Heart right ventricle (tissue), 16 donors: ENCODE measurements at regions of chr6 and their contacts with region 1.

Region 1: DNA sequence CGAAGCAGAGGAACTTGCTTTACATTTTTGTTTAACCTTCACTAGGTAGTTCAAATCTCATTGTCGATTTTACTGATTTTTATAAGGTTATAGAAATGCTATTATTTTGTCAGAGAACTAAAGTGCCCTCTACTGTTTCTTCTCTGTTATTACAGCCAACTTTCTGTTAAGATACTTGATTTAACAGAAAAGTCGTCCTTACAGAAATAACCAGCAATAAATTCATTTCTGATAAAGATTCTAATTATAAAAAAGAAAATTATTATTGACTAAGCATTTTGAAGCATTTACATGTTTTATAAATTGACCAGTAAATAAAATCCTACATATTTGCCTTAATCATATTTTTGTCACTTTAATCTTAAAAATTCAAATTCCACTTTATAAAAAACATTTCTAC is 60.8 kb downstream of the OGFRL1 start:
- DNase-seq: no peak
- ATAC-seq: peak in 1 of 8 donors; percentile 52
- H3K4me3 ChIP-seq: no peak overlapping the region
- H3K27ac ChIP-seq: peak overlapping the region in 7 of 10 donors; percentile 28 to 83 (median 57)
- H3K4me1 ChIP-seq: peaks cover 0 to 38% (median 20%) of the 10 kb centered on the region in 9 donors
- H3K27me3 ChIP-seq: no peaks in the 10 kb centered on the region
- CTCF ChIP-seq: peak; percentile 60 to 85 (median 77)

Region 2: DNA sequence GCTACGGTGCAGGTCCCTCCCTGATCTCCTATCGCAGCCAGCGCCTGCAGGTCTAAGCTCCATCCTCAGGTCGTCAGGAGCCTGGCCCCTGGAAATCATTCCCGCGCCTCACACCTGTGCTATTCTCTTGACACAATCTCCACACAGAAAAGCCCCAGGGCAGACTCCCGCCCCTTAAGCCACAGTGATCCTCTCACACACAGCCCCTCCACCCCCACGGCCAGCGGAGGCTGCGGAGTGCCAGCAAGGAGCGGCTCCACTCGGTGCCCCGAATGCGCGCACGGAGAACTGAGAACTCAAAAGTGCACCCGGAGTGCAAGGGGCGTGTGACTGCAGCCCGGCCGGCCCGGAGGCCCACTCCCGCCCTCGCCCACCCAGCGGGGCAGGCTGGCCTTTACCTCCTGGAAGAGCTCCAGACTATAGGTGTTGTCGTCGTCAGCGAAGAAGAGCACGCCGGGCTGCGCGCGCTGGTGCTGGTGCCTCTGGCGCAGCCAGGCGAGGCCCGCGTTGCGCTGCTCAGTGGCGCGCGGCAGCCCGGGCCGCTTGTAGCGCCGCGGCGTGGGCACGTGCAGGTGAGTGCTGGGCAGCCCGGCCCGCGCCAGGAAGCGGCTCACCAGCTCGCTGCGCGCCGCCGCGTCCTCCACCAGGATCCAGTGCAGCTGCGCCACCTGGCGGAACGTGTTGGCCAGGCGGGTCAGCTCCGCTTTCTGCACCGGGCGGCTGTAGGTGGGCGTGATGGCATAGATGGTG is 393.8 kb before region 1 on chr6:
- intact Hi-C with region 1: loop called in 1 of 10 experiments (anchors 10 kb)
- DNase-seq: peak; percentile 77 to 87
- ATAC-seq: peak; percentile 88 to 97 (median 94)
- H3K4me3 ChIP-seq: peak overlapping the region; percentile 49 to 66 (median 60)
- H3K27ac ChIP-seq: no peak overlapping the region
- H3K4me1 ChIP-seq: peaks cover 6 to 24% (median 15%) of the 10 kb centered on the region in 9 donors
- H3K27me3 ChIP-seq: peaks cover 8 to 87% (median 43%) of the 10 kb centered on the region in 7 donors
- CTCF ChIP-seq: peak; percentile 70 to 93 (median 86)

Region 3: DNA sequence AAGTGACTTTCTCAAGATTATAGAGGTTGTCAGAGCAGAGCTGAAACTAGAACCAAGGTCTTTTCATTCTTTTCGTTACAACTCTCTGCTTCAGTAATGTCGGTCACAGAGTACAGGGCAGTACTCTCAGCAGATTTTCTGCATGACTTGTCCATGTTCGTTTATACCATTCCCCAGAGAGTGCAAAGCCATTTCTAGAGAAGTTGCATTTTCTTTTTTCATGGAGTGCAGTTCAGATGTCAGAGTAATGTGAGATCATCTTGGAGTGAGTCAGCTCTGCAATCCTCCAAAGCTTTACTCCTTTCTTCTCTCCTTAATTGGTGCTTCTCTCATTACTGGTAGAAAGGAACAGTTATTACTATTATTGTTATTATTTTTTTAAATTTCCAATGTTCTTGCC is 276.9 kb before region 1 on chr6:
- intact Hi-C with region 1: loop called in 1 of 10 experiments (anchors 5 kb)
- DNase-seq: no peak
- ATAC-seq: peak in 6 of 8 donors; percentile 42 to 78 (median 64)
- H3K4me3 ChIP-seq: no peak overlapping the region
- H3K27ac ChIP-seq: no peak overlapping the region
- H3K4me1 ChIP-seq: peaks cover 0 to 16% (median 0%) of the 10 kb centered on the region in 9 donors
- H3K27me3 ChIP-seq: no peaks in the 10 kb centered on the region
- CTCF ChIP-seq: no peak

Region 4: DNA sequence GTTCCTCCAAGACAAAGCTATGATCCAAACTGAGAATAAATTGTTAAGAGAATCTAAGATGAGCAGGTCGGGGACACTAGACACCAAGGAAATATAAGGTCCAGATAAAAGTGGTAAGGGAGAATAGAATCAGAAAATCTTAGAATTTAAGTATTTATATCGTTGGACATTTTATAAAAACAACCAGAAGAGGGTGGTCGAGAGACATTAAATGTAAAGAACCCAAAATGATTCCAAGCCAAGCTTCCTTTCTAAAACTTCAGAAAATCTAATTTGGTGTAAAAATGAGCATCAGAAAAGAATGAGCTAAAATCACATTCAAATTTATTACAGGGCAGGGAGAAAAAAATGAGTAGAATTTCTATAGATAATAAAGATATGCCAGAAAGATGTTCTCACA is 158.6 kb before region 1 on chr6:
- intact Hi-C with region 1: loop called (anchors 1 to 10 kb)
- DNase-seq: no peak
- ATAC-seq: no peak
- H3K4me3 ChIP-seq: no peak overlapping the region
- H3K27ac ChIP-seq: no peak overlapping the region
- H3K4me1 ChIP-seq: no peaks in the 10 kb centered on the region
- H3K27me3 ChIP-seq: no peaks in the 10 kb centered on the region
- CTCF ChIP-seq: peak; percentile 6 to 61 (median 43)

Region 5: GRCh38 chr6:71288228-71289001 is 61.0 kb before region 1 on chr6 and contains the start of gene OGFRL1:
- intact Hi-C with region 1: loop called in 2 of 10 experiments (anchors 5 to 10 kb)
- DNase-seq: peak; percentile 77 to 86
- ATAC-seq: peak; percentile 89 to 99 (median 95)
- H3K4me3 ChIP-seq: peak within 1 kb of the TSS; percentile 30 to 94 (median 82)
- H3K27ac ChIP-seq: peak within 1 kb of the TSS; percentile 89 to 97 (median 95)
- H3K4me1 ChIP-seq: peaks cover 0 to 67% (median 50%) of the 10 kb centered on the region in 9 donors
- H3K27me3 ChIP-seq: no peaks in the 10 kb centered on the region
- CTCF ChIP-seq: peak in 3 of 9 donors; percentile 26 to 52 (median 39)
- total RNA-seq, gene OGFRL1: 5.3 to 12.9 (median 9.1) TPM

Region 6: DNA sequence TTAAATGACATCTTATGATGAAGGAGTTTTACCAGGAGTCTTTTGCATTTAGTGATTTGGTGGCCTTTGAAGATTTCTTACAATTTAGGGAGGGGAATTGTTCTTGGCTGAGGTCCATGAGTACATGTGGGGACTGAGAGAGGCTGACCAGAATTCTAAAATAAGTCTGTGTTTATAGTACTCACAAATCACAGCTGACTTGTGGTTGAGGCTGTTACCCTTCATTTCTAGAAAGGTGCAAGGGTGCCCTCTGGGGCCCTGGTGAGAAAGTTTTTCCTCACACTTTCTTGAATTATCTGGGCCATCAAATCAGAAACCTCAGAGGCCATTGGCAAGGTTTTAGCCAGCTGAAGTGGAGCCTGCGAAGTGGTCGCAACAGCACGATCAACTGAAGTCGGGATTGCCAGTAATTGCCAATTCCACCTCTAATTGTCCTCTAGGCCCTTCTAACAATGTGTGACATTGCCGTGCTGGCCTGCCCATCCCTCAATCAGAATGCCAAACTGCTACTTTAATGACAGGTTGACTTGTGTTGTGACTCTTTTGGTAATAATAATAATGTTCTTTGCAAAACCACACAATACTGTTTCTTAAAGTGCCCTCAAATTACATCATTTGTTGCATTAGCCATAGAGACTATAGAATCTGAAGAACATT is 160.8 kb after region 1 on chr6:
- intact Hi-C with region 1: no loop called
- DNase-seq: peak; percentile 19 to 56
- ATAC-seq: peak in 7 of 8 donors; percentile 82 to 97 (median 89)
- H3K4me3 ChIP-seq: no peak overlapping the region
- H3K27ac ChIP-seq: peak overlapping the region in 1 of 10 donors; percentile 7
- H3K4me1 ChIP-seq: peaks cover 0 to 21% (median 0%) of the 10 kb centered on the region in 9 donors
- H3K27me3 ChIP-seq: no peaks in the 10 kb centered on the region
- CTCF ChIP-seq: peak; percentile 39 to 80 (median 66)

Region 7: GRCh38 chr6:71579902-71580301 is 230.5 kb after region 1 on chr6:
- intact Hi-C with region 1: no loop called
- DNase-seq: no peak
- ATAC-seq: no peak
- H3K4me3 ChIP-seq: no peak overlapping the region
- H3K27ac ChIP-seq: no peak overlapping the region
- H3K4me1 ChIP-seq: no peaks in the 10 kb centered on the region
- H3K27me3 ChIP-seq: no peaks in the 10 kb centered on the region
- CTCF ChIP-seq: no peak

Region 8: DNA sequence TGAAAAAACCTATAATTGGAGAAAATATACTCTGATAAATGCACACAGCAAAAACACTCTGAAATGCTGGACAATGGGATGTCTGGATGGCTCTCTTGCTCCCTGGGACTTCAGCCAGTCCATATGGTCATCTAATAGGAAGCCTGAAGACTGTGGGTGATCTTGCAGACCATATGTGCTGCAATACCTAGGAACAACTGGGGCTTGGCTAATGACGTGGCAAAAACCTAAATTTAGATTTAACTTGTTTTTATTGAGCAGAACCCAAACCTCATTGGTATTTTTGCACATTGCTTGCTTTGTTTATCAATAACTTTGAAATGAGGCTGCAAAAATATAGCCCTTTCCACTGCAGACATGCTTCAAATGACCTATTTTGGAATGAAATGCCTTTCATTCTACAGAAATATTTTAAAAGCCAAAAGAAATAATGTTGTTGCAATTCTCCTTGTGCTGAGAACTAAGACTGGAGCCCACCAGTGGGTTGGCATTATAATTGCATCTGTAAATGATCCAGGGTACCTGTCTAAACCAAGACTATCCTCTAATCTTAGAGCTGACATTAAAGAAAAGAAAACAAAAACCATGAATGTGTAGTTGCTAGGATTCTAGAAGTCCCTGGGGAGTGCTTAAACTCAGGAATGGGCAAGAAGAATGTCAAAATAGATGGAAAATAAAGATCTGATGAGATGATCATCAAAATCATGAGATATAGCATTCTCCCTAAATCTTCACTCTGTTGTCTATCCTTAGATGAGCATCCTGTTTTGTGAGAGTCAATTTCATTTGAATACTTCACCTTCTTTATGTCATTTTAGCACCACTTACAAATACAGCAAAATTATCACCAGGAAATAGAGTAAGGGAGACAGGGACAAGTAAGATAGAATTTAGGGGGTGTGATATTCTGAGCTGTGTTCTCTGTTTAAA is 384.8 kb after region 1 on chr6:
- intact Hi-C with region 1: no loop called
- DNase-seq: no peak
- ATAC-seq: no peak
- H3K4me3 ChIP-seq: no peak overlapping the region
- H3K27ac ChIP-seq: no peak overlapping the region
- H3K4me1 ChIP-seq: no peaks in the 10 kb centered on the region
- H3K27me3 ChIP-seq: no peaks in the 10 kb centered on the region
- CTCF ChIP-seq: no peak